PC-9 (cell line): ENCODE measurements at regions of chr7 and their contacts with region 1.

Region 1: GRCh38 chr7:17289074-17289645 is 9.3 kb upstream of the AHR start:
- DNase-seq: no peak
- H3K4me3 ChIP-seq: no peak overlapping the region
- H3K27ac ChIP-seq: no peak overlapping the region
- H3K4me1 ChIP-seq: no peaks in the 10 kb centered on the region
- H3K27me3 ChIP-seq: no peaks in the 10 kb centered on the region
- CTCF ChIP-seq: no peak

Region 2: GRCh38 chr7:17313194-17313593 is 24.0 kb after region 1 on chr7:
- CTCF ChIA-PET with region 1: no interaction called
- POLR2A ChIA-PET with region 1: interaction called, 11 read pairs
- intact Hi-C with region 1: no loop called
- DNase-seq: no peak
- H3K4me3 ChIP-seq: no peak overlapping the region
- H3K27ac ChIP-seq: no peak overlapping the region
- H3K4me1 ChIP-seq: peaks cover 4% of the 10 kb centered on the region; the same call in 1 of the 2 replicates
- H3K27me3 ChIP-seq: no peaks in the 10 kb centered on the region
- CTCF ChIP-seq: no peak